ENCODE measurements at regions of chr19 and their contacts with region 1.

Region 1: DNA sequence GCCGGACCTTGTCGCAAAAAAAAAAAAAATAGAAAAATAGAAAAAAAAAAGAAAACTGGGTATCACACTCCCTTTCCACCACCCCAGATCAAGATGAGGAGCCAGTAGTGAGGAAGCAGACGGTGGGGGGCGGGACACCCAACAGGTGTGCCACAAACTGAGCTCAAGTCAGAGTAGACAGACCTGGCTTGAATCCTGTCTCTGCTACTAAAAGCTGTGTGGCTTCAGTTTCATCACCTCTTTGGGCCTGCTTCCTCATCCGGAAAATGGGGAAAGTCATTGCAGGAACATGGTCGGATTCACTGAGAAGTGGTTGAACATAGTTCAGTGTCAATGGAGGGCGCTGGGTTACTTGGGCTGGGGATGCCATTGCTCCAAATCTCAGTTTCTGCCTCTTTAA is 2.9 kb downstream of the HIF3A start:
- DNase-seq: no peak
- CTCF ChIP-seq: no peak

Region 2: DNA sequence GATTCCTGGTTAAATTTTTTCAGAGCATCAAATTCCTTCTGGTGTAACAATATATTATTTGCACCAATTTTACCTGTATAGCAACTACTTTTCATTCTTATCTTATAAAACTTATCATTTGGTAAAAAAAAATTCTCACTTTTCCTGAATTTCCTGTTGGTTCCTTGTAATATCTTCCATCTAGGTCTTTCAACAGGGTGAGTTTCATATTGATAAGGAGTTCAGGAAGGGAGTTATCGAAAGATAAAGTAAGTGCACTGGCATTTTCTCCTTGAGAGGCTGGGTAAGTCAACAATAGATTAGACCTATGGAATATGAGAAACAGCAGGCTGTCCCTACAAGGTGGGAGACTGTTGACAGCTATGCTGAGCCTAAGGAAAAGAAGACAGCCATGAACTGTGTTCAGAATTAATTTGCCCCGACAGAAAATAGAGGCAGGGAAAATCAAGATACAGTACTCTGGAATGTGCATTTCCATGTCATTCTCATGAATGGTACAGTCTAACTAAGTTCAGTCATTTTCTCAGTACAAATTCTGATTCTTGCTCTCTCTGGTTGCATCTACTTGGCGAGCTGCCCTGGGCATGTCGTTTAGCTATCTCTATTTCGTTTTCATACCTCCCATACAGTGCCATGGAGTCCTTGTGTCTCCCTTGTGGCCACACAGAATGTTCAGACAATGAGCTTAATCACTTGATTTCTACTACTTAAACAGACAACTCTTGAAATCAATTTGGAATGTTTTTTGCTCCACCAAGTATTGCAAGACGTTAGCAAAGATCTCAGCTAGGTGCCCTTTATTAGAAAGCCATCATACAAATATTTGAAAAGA is 60.3 kb before region 1 on chr19:
- CTCF ChIA-PET with region 1: no interaction called
- POLR2A ChIA-PET with region 1: no interaction called
- DNase-seq: no peak
- CTCF ChIP-seq: no peak

Region 3: GRCh38 chr19:46319613-46320012 is 19.9 kb after region 1 on chr19:
- CTCF ChIA-PET with region 1: no interaction called
- POLR2A ChIA-PET with region 1: no interaction called
- DNase-seq: no peak
- CTCF ChIP-seq: no peak

Region 4: GRCh38 chr19:46442808-46443450 is 143.2 kb after region 1 on chr19:
- CTCF ChIA-PET with region 1: no interaction called
- POLR2A ChIA-PET with region 1: interaction called, 10 read pairs
- DNase-seq: no peak
- CTCF ChIP-seq: no peak

Measured in GM10248 (cell line).